ENCODE measurements at regions of chr13 and their contacts with region 1.

Region 1: DNA sequence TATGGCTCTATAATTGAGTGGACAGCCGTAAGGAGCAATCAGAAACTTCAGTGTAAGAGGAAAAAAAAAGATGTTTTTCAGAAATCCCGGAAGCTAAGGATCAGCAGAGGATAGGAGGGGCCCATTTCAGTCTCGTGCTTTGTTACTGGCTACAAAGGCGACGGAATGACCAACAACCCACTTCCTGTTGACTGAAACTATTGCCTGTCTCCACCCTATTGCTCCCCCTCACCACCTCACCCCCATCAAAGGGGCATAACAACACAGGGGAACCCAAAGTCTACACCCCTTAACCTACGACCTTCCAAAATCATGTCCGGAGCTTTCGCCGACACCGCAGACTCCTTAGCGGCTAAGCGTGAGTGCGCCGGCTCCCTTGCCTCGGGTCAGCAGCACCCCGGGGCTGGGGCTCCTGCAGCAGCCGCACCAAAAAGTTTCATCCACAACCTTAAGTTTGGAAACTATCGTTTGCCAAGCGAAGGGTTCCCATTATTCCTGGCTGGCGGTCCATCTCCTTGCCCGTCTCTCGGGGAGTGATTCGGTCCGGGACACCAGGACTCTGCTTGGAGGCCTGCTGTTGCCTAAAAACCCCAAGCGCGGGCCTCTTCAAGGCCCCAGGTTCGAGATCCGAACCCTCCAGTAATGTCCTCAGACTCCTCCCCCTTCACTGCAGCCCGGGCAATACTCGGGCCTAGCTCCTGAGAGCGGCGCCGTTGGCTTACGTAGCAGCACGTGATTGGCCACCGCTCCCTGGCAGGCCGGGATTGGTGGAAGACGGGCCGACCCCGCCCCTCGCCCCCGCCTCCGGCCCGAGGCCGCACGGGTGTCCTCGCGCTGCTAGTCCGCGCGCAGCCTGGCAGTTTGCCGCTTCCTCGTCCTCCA is at the start of gene TPP2:
- DNase-seq: peak; percentile 99
- H3K4me3 ChIP-seq: peak within 1 kb of the TSS; percentile 81
- H3K4me3 Mint-ChIP-seq: peak within 1 kb of the TSS; percentile 86
- H3K27ac Mint-ChIP-seq: peak within 1 kb of the TSS; percentile 91
- H3K4me1 ChIP-seq: peaks cover 3% of the 10 kb centered on the region; the same call in 1 of the 2 replicates
- H3K4me1 Mint-ChIP-seq: peaks cover 23% of the 10 kb centered on the region
- H3K27me3 ChIP-seq: no peaks in the 10 kb centered on the region
- H3K27me3 Mint-ChIP-seq: no peaks in the 10 kb centered on the region
- CTCF ChIP-seq: no peak
- total RNA-seq, gene TPP2: 58.9 and 64.3 TPM in 2 replicates

Region 2: GRCh38 chr13:102606537-102607309 is 10.3 kb after region 1 on chr13:
- CTCF ChIA-PET with region 1: interaction called, 3 read pairs
- POLR2A ChIA-PET with region 1: interaction called, 16 read pairs
- intact Hi-C with region 1: no loop called
- DNase-seq: no peak
- H3K4me3 ChIP-seq: no peak overlapping the region
- H3K4me3 Mint-ChIP-seq: no peak overlapping the region
- H3K27ac Mint-ChIP-seq: no peak overlapping the region
- H3K4me1 ChIP-seq: peaks cover 3% of the 10 kb centered on the region; the same call in 1 of the 2 replicates
- H3K4me1 Mint-ChIP-seq: peaks cover 16% of the 10 kb centered on the region
- H3K27me3 ChIP-seq: no peaks in the 10 kb centered on the region
- H3K27me3 Mint-ChIP-seq: no peaks in the 10 kb centered on the region
- CTCF ChIP-seq: no peak

Region 3: DNA sequence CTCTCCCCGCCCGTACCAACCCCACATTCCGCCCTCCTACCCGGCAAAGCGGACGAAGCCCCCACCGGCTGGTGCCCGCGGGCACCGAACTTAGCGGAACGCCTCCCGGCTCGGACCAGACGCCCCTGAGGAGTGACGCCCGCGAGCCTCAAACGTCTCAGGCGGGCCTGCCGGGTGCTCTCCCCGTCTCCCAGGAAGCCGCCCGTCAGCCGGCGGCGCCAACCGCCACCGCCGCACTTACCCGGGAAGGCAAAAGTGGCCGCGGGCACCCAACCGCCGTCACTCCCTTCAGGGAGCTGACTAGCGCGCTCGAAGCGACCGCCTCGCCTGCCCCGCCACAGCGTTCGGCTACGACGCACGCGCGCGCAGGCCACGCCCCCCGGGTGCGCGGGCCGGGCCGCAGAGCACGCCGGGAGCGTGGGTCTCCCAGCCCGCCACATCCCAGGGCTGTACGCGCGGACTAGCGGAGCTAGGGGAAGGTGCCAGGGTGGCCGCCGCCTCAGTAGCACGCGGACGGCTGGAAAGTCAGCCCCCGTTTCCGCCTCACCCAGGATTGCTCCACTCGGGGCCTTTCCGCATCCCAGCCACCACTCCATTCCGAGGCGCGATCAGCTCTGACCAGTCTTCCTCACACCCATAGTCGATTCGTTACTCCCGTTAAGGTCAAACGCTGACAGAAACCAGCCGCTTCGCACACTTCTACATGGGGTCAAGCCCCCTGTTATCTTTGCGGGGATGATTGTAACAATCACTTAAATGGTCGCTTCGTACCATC is 177.2 kb after region 1 on chr13 and contains the start of gene TEX30:
- CTCF ChIA-PET with region 1: no interaction called
- POLR2A ChIA-PET with region 1: interaction called, 7 read pairs
- intact Hi-C with region 1: loop called (anchors 1 kb)
- DNase-seq: peak; percentile 87 to 94
- H3K4me3 ChIP-seq: peak within 1 kb of the TSS; percentile 96
- H3K4me3 Mint-ChIP-seq: peak within 1 kb of the TSS; percentile 92
- H3K27ac Mint-ChIP-seq: peak within 1 kb of the TSS; percentile 94
- H3K4me1 ChIP-seq: peaks cover 24% of the 10 kb centered on the region
- H3K4me1 Mint-ChIP-seq: peaks cover 31% of the 10 kb centered on the region
- H3K27me3 ChIP-seq: no peaks in the 10 kb centered on the region
- H3K27me3 Mint-ChIP-seq: no peaks in the 10 kb centered on the region
- CTCF ChIP-seq: no peak
- total RNA-seq, gene TEX30: 27.5 and 30.4 TPM in 2 replicates

Region 4: DNA sequence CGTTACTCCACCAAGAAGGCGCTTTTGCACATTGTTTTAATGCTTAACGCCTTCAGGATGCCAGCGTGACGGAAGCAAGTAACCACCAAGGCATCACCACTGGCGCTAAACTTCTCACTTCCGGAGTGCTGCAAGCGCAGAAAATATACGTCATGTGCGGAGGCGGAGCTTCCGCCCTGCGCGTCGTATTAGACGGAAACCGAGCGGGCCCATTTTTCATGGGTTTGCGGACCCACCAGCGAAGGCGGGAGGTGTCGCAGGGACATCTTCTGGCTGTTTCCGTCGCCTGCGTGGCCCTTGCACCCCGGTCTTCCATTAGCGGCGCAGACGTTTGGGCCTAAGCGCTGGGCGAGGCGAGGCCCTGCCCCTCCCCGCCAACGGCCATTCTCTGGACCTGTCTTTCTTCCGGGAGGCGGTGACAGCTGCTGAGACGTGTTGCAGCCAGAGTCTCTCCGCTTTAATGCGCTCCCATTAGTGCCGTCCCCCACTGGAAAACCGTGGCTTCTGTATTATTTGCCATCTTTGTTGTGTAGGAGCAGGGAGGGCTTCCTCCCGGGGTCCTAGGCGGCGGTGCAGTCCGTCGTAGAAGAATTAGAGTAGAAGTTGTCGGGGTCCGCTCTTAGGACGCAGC is 249.4 kb after region 1 on chr13 and contains the start of gene ERCC5:
- CTCF ChIA-PET with region 1: interaction called, 7 read pairs
- POLR2A ChIA-PET with region 1: interaction called, 12 read pairs
- intact Hi-C with region 1: loop called (anchors 1 kb)
- DNase-seq: peak; percentile 95 to 97
- H3K4me3 ChIP-seq: peak within 1 kb of the TSS; percentile 70
- H3K4me3 Mint-ChIP-seq: peak within 1 kb of the TSS; percentile 77
- H3K27ac Mint-ChIP-seq: peak within 1 kb of the TSS; percentile 92
- H3K4me1 ChIP-seq: no peaks in the 10 kb centered on the region
- H3K4me1 Mint-ChIP-seq: no peaks in the 10 kb centered on the region
- H3K27me3 ChIP-seq: no peaks in the 10 kb centered on the region
- H3K27me3 Mint-ChIP-seq: no peaks in the 10 kb centered on the region
- CTCF ChIP-seq: peak in 1 of 2 experiments; percentile 15
- total RNA-seq, gene ERCC5: 29.9 and 31.4 TPM in 2 replicates

Region 5: GRCh38 chr13:102856557-102856956 is 260.2 kb after region 1 on chr13:
- CTCF ChIA-PET with region 1: no interaction called
- POLR2A ChIA-PET with region 1: no interaction called
- intact Hi-C with region 1: no loop called
- DNase-seq: no peak
- H3K4me3 ChIP-seq: no peak overlapping the region
- H3K4me3 Mint-ChIP-seq: no peak overlapping the region
- H3K27ac Mint-ChIP-seq: no peak overlapping the region
- H3K4me1 ChIP-seq: no peaks in the 10 kb centered on the region
- H3K4me1 Mint-ChIP-seq: no peaks in the 10 kb centered on the region
- H3K27me3 ChIP-seq: no peaks in the 10 kb centered on the region
- H3K27me3 Mint-ChIP-seq: no peaks in the 10 kb centered on the region
- CTCF ChIP-seq: no peak